Heart right ventricle (tissue), 16 donors: ENCODE measurements at regions of chr4 and their contacts with region 1.

Region 1: GRCh38 chr4:79650794-79651431 is 242.9 kb upstream of the GK2 start:
- DNase-seq: no peak
- ATAC-seq: no peak
- H3K4me3 ChIP-seq: no peak overlapping the region
- H3K27ac ChIP-seq: no peak overlapping the region
- H3K4me1 ChIP-seq: peaks cover 0 to 18% (median 0%) of the 10 kb centered on the region in 9 donors
- H3K27me3 ChIP-seq: no peaks in the 10 kb centered on the region
- CTCF ChIP-seq: no peak

Region 2: GRCh38 chr4:79597266-79597665 is 53.6 kb before region 1 on chr4:
- intact Hi-C with region 1: loop called in 1 of 10 experiments (anchors 5 kb)
- DNase-seq: no peak
- ATAC-seq: peak in 1 of 8 donors; percentile 42
- H3K4me3 ChIP-seq: no peak overlapping the region
- H3K27ac ChIP-seq: no peak overlapping the region
- H3K4me1 ChIP-seq: peaks cover 0 to 17% (median 0%) of the 10 kb centered on the region in 9 donors
- H3K27me3 ChIP-seq: no peaks in the 10 kb centered on the region
- CTCF ChIP-seq: no peak